ENCODE measurements at regions of chr5 and their contacts with region 1.

Region 1: DNA sequence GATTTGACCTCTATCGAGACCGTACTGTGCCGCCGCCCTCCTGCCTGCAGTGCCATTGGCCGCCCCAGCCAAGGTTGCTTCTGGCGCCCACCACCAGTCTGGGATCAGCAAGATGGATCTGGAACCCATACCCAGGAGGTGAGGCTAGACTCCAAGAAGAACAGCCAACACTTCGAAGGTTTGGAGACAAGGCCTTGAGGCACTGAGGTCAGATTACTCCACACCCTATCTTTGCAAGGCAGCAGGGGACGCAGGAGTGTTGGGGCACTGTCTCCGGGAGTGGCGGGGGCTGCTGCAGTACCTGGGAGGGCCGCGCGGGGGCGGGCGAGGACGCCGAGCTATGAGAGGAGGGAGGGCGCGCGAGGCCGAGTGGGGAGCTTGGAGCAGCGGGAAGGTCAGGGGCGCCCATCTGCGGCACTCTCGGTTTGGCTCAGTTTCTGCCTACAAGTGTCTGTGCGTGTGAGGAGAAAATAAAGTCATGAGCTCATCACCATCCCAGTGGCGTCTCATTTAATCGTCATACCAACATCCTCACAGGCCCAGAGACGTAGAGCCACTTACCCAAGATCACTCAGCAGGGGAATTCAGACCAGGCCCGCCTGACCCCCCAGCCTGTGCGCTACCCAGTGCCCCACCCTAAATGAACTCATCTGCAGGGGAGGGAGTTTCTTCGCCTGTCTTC is 20.5 kb upstream of the PSD2 start:
- DNase-seq: peak; percentile 97
- ATAC-seq: peak; percentile 97
- H3K4me3 Mint-ChIP-seq: peak overlapping the region; percentile 34; the same call in 1 of the 2 replicates
- H3K27ac Mint-ChIP-seq: no peak overlapping the region
- H3K4me1 Mint-ChIP-seq: peaks cover 11% of the 10 kb centered on the region; the same call in 1 of the 2 replicates
- H3K27me3 Mint-ChIP-seq: peaks cover 28% of the 10 kb centered on the region
- CTCF ChIP-seq: peak; percentile 98

Region 2: GRCh38 chr5:139600336-139600949 is 174.7 kb before region 1 on chr5:
- CTCF ChIA-PET with region 1: no interaction called
- POLR2A ChIA-PET with region 1: no interaction called
- DNase-seq: no peak
- ATAC-seq: no peak
- H3K4me3 Mint-ChIP-seq: no peak overlapping the region
- H3K27ac Mint-ChIP-seq: no peak overlapping the region
- H3K4me1 Mint-ChIP-seq: no peaks in the 10 kb centered on the region
- H3K27me3 Mint-ChIP-seq: no peaks in the 10 kb centered on the region
- CTCF ChIP-seq: no peak

Region 3: GRCh38 chr5:139651853-139652787 is 123.0 kb before region 1 on chr5:
- CTCF ChIA-PET with region 1: interaction called, 14 read pairs
- POLR2A ChIA-PET with region 1: no interaction called
- DNase-seq: peak; percentile 92
- ATAC-seq: peak; percentile 33
- H3K4me3 Mint-ChIP-seq: peak overlapping the region; percentile 98
- H3K27ac Mint-ChIP-seq: peak overlapping the region; percentile 96
- H3K4me1 Mint-ChIP-seq: peaks cover 63% of the 10 kb centered on the region
- H3K27me3 Mint-ChIP-seq: no peaks in the 10 kb centered on the region
- CTCF ChIP-seq: no peak

Region 4: GRCh38 chr5:139696894-139697658 is 78.0 kb before region 1 on chr5:
- CTCF ChIA-PET with region 1: interaction called, 13 read pairs
- POLR2A ChIA-PET with region 1: no interaction called
- DNase-seq: peak; percentile 77
- ATAC-seq: peak; percentile 23
- H3K4me3 Mint-ChIP-seq: peak overlapping the region; percentile 66
- H3K27ac Mint-ChIP-seq: peak overlapping the region; percentile 88; the same call in 1 of the 2 replicates
- H3K4me1 Mint-ChIP-seq: peaks cover 60% of the 10 kb centered on the region
- H3K27me3 Mint-ChIP-seq: peaks cover 28% of the 10 kb centered on the region
- CTCF ChIP-seq: no peak

Region 5: GRCh38 chr5:139745800-139746690 is 29.1 kb before region 1 on chr5:
- CTCF ChIA-PET with region 1: interaction called, 23 read pairs
- POLR2A ChIA-PET with region 1: no interaction called
- DNase-seq: peak; percentile 88
- ATAC-seq: peak; percentile 72
- H3K4me3 Mint-ChIP-seq: peak overlapping the region; percentile 77
- H3K27ac Mint-ChIP-seq: peak overlapping the region; percentile 93; the same call in 1 of the 2 replicates
- H3K4me1 Mint-ChIP-seq: peaks cover 52% of the 10 kb centered on the region
- H3K27me3 Mint-ChIP-seq: peaks cover 64% of the 10 kb centered on the region
- CTCF ChIP-seq: no peak

Region 6: DNA sequence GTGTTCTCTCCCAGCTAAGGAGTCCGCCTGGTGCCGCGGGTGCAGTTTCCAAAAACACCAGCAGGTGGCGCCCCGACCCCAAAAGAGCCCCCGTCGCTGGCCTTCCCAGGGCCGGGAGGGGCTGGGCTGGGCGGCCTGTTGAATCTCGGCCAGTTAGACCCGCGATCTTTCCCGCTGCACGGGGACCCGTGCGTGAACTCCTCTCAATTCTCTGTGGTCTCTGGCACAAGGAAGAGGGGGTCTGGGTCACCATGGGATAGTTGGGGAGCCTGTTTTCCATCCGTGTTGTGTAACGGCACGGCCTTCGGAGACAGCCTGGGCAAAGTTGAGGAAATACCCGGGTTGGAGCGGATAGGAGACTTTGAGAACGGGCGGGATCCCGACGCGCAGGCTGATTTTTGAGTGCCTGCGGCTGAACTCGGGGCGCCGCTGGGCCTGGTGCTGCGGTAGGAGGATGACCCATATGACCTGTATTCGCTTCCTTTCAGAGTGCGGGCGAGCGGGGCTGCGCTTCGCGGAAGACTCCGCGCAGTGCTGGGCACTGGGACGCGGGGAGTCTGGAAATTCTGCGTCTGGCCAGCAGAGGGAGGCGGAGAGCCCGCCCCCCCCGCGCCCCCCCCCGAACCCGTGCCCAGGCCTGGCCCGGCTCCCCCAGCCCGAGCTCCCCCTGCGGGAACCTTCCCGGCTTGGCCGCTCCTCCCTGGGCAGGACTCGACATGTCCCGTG is 12.6 kb after region 1 on chr5:
- CTCF ChIA-PET with region 1: interaction called, 95 read pairs
- POLR2A ChIA-PET with region 1: interaction called, 4 read pairs
- DNase-seq: peak; percentile 94
- ATAC-seq: peak; percentile 81
- H3K4me3 Mint-ChIP-seq: peak overlapping the region; percentile 91
- H3K27ac Mint-ChIP-seq: no peak overlapping the region
- H3K4me1 Mint-ChIP-seq: peaks cover 4% of the 10 kb centered on the region
- H3K27me3 Mint-ChIP-seq: peaks cover 66% of the 10 kb centered on the region
- CTCF ChIP-seq: peak; percentile 98

Region 7: DNA sequence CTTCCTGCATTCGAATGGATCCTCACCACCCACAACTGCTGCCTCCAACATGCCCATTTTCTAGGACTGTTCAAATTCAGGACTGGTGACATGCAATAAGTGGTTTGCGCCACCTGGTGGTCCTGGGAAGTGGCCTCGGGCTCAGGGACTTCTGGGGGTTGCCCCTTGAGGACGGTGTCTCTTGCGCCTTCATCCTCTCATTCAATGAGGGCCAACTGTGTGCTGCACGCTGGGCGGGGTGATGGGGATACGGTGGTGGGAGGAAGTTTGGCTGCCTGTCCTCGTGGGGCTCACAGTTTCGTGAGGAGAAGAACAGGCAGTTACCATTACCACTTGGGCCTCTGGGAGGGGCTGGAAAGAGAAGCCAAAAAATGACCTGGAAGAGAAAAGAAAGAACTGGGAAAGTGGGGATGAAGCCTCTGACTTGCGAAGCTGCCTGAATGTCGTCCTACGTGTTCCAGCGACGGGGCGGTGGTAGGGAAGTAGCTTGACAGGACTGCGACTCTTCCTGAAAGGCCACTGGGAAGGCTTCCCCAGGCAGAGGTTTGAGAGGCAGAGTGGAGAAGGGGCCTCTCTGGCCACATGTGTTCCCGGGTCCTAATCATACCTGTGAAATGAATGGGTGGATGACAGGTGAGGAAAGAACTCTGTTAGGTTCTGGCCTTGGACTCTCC is 69.5 kb after region 1 on chr5:
- CTCF ChIA-PET with region 1: interaction called, 17 read pairs
- POLR2A ChIA-PET with region 1: no interaction called
- DNase-seq: peak; percentile 94
- ATAC-seq: peak; percentile 86
- H3K4me3 Mint-ChIP-seq: no peak overlapping the region
- H3K27ac Mint-ChIP-seq: no peak overlapping the region
- H3K4me1 Mint-ChIP-seq: peaks cover 9% of the 10 kb centered on the region
- H3K27me3 Mint-ChIP-seq: peaks cover 51% of the 10 kb centered on the region
- CTCF ChIP-seq: peak; percentile 58

Region 8: GRCh38 chr5:139872052-139872766 is 97.1 kb after region 1 on chr5:
- CTCF ChIA-PET with region 1: interaction called, 11 read pairs
- POLR2A ChIA-PET with region 1: no interaction called
- DNase-seq: peak; percentile 45
- ATAC-seq: peak; percentile 73
- H3K4me3 Mint-ChIP-seq: no peak overlapping the region
- H3K27ac Mint-ChIP-seq: no peak overlapping the region
- H3K4me1 Mint-ChIP-seq: peaks cover 19% of the 10 kb centered on the region
- H3K27me3 Mint-ChIP-seq: no peaks in the 10 kb centered on the region; the same call in 1 of the 2 replicates
- CTCF ChIP-seq: 0 out of 2 replicates have a peak, but pooled peaks have one; percentile 24

Region 9: GRCh38 chr5:139925650-139926640 is 150.8 kb after region 1 on chr5:
- CTCF ChIA-PET with region 1: no interaction called
- POLR2A ChIA-PET with region 1: no interaction called
- DNase-seq: no peak
- ATAC-seq: no peak
- H3K4me3 Mint-ChIP-seq: no peak overlapping the region
- H3K27ac Mint-ChIP-seq: no peak overlapping the region
- H3K4me1 Mint-ChIP-seq: no peaks in the 10 kb centered on the region
- H3K27me3 Mint-ChIP-seq: peaks cover 12% of the 10 kb centered on the region
- CTCF ChIP-seq: no peak

Measured in WTC11 (cell line).